Heart left ventricle (tissue), 16 donors: ENCODE measurements at regions of chr4 and their contacts with region 1.

Region 1: GRCh38 chr4:25439918-25440477 is 62.9 kb downstream of the ANAPC4 start:
- DNase-seq: peak in 2 of 5 donors; percentile 38
- ATAC-seq: peak in 3 of 4 donors; percentile 55 to 76 (median 68)
- H3K4me3 ChIP-seq: no peak overlapping the region
- H3K27ac ChIP-seq: no peak overlapping the region
- H3K4me1 ChIP-seq: peaks cover 0 to 11% (median 5%) of the 10 kb centered on the region in 12 donors
- H3K27me3 ChIP-seq: no peaks in the 10 kb centered on the region
- CTCF ChIP-seq: peak; percentile 71 to 92 (median 86)
- POLR2A ChIP-seq: no peak

Region 2: DNA sequence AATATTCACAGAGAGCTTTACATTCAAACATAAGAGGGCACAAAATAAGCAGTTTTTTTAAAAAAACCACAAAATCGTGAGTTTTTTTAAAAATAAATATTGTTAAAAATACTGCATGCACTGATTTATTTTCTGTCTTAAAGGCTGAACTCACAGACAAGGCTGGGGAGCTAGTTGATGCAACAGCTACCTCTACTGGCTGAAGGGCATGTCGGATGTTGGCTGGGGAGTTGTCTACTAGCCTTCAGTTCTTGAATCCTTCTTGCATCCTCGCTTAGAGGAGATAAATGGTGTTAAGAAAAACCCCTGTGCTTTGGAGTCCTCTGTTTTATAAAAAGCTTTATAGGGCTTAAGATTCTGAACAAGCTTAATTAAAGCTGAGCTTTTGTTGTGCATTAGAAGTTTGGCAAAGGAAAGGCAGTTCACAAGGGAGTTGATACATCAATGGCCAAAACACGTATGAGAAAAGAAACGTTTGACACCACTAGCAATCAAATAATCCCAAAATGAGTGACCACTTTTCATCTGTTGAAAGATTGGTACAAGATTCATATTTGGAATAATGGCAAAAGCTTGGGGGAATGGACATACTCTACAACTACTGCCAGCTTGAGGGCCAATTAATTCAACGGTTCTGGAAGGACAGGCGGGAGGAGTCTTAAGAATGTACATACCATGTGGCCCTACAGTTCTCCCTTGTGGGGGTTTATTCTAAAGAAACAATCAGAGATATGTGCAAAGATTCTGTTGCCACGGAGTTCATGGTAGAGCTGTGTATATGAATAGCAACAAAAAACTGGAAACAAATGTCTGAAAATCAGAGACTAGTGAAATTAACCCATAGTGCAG is 328.1 kb after region 1 on chr4:
- intact Hi-C with region 1: loop called (anchors 1 to 2 kb)
- DNase-seq: peak in 4 of 5 donors; percentile 40 to 57 (median 52)
- ATAC-seq: peak; percentile 73 to 92 (median 89)
- H3K4me3 ChIP-seq: no peak overlapping the region
- H3K27ac ChIP-seq: no peak overlapping the region
- H3K4me1 ChIP-seq: peaks cover 0 to 9% (median 0%) of the 10 kb centered on the region in 12 donors
- H3K27me3 ChIP-seq: no peaks in the 10 kb centered on the region
- CTCF ChIP-seq: peak; percentile 64 to 87 (median 76)
- POLR2A ChIP-seq: no peak

Region 3: GRCh38 chr4:25890571-25891485 is 450.8 kb after region 1 on chr4:
- intact Hi-C with region 1: loop called in 1 of 10 experiments (anchors 10 kb)
- DNase-seq: no peak
- ATAC-seq: peak in 1 of 4 donors; percentile 53
- H3K4me3 ChIP-seq: no peak overlapping the region
- H3K27ac ChIP-seq: no peak overlapping the region
- H3K4me1 ChIP-seq: peaks cover 0 to 17% (median 0%) of the 10 kb centered on the region in 12 donors
- H3K27me3 ChIP-seq: no peaks in the 10 kb centered on the region
- CTCF ChIP-seq: no peak
- POLR2A ChIP-seq: no peak

Region 4: GRCh38 chr4:25908491-25908901 is 468.5 kb after region 1 on chr4:
- intact Hi-C with region 1: loop called in 1 of 10 experiments (anchors 10 kb)
- DNase-seq: peak in 1 of 5 donors; percentile 48
- ATAC-seq: peak; percentile 24 to 86 (median 60)
- H3K4me3 ChIP-seq: no peak overlapping the region
- H3K27ac ChIP-seq: no peak overlapping the region
- H3K4me1 ChIP-seq: peaks cover 0 to 7% (median 5%) of the 10 kb centered on the region in 12 donors
- H3K27me3 ChIP-seq: no peaks in the 10 kb centered on the region
- CTCF ChIP-seq: no peak
- POLR2A ChIP-seq: no peak